ENCODE measurements at regions of chr2 and their contacts with region 1.

Region 1: GRCh38 chr2:152175458-152176325 is at the start of gene STAM2:
- DNase-seq: peak; percentile 95
- H3K4me3 ChIP-seq: peak within 1 kb of the TSS; percentile 83
- H3K27ac ChIP-seq: peak within 1 kb of the TSS; percentile 96
- H3K4me1 ChIP-seq: no peaks in the 10 kb centered on the region
- H3K27me3 ChIP-seq: no peaks in the 10 kb centered on the region
- CTCF ChIP-seq: peak; percentile 98
- total RNA-seq, gene STAM2: 21.3 and 28.1 TPM in 2 replicates

Region 2: GRCh38 chr2:152036611-152037469 is 138.9 kb before region 1 on chr2:
- CTCF ChIA-PET with region 1: no interaction called
- POLR2A ChIA-PET with region 1: no interaction called
- intact Hi-C with region 1: loop called (anchors 1 kb)
- DNase-seq: peak; percentile 80
- H3K4me3 ChIP-seq: no peak overlapping the region
- H3K27ac ChIP-seq: no peak overlapping the region
- H3K4me1 ChIP-seq: no peaks in the 10 kb centered on the region
- H3K27me3 ChIP-seq: no peaks in the 10 kb centered on the region
- CTCF ChIP-seq: peak; percentile 84

Region 3: DNA sequence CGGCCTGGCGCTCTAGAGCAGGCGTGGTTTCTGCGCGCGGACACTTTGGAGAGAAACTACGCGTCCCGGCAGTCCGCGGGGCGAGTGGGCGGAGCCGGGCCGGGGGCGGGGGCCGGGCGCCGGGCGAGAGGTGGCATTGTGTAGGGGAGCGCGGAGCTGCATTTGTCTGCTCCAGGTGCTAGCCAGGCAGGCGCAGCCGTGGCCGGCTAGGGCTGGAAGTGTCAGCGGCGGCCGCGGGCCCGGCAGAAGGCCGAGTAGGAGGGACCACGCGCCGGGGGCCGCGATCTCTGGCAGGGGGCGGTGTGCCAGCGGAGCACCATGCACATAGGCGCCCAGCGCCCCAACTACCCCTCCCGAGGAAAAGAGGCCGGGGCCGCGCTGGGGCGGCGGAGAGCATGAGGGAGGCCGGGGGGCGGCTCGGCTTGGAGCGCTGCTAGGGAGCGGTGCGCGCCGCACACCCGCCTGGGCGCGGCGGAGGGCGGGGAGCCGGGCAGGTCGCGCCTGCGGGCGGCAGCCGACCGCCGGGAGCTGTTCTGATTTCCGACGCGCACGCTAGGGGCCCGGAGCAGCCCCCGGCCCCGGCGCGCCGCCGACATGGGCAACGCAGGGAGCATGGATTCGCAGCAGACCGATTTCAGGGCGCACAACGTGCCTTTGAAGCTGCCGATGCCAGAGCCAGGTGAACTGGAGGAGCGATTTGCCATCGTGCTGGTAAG is 159.5 kb after region 1 on chr2 and contains the start of gene FMNL2:
- CTCF ChIA-PET with region 1: no interaction called
- POLR2A ChIA-PET with region 1: no interaction called
- intact Hi-C with region 1: loop called (anchors 1 kb)
- DNase-seq: peak; percentile 91
- H3K4me3 ChIP-seq: peak within 1 kb of the TSS; percentile 97
- H3K27ac ChIP-seq: peak within 1 kb of the TSS; percentile 82
- H3K4me1 ChIP-seq: peaks cover 14% of the 10 kb centered on the region
- H3K27me3 ChIP-seq: no peaks in the 10 kb centered on the region
- CTCF ChIP-seq: peak; percentile 29; the same call in 1 of the 2 replicates
- total RNA-seq, gene FMNL2: 42.2 and 43.1 TPM in 2 replicates

Region 4: DNA sequence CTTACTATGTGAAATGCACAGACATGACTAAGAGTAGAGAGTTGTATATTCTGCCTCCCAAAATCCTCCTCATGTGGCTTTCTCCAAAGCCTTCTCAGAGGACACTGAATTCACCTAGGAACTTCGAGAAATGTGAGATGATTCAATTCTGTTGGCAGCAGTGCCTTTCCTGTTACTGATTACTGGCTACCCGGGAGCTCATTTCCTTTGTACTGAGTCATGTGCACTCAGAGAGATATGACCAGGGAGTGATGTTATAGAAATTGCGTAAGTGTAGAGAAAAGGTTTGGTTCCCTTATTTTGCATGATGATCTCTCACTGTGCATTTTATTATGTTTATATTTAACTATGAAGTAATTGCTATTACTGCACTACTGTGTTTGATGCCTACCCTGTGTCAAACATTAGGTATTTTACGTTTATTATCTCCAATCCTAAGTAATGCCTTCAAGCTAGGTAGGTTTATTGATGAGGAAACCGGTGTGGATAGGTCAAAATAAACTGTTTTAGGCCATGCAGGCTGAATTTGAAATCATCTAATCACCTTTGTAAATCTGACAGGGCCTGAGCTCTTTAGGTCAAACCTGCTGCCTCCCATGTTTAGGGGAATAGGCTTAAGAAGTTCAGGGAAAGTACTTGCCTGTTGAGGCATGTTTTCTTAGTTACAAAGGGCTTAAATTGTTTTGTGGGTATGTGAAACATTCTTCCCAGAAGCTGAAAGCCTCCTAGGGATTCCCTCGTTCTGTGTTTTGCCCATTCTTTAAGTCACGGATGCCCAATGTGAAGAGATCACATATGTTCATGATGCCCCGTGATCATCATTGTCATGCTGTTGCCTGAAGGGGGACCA is 246.1 kb after region 1 on chr2:
- CTCF ChIA-PET with region 1: interaction called, 3 read pairs
- POLR2A ChIA-PET with region 1: no interaction called
- intact Hi-C with region 1: loop called (anchors 5 kb)
- DNase-seq: peak; percentile 98
- H3K4me3 ChIP-seq: peak overlapping the region; percentile 8
- H3K27ac ChIP-seq: peak overlapping the region; percentile 86
- H3K4me1 ChIP-seq: peaks cover 75% of the 10 kb centered on the region
- H3K27me3 ChIP-seq: no peaks in the 10 kb centered on the region
- CTCF ChIP-seq: no peak

Region 5: GRCh38 chr2:152635635-152636298 is 460.1 kb after region 1 on chr2:
- CTCF ChIA-PET with region 1: interaction called, 15 read pairs
- POLR2A ChIA-PET with region 1: no interaction called
- intact Hi-C with region 1: loop called (anchors 2 kb)
- DNase-seq: peak; percentile 68
- H3K4me3 ChIP-seq: no peak overlapping the region
- H3K27ac ChIP-seq: no peak overlapping the region
- H3K4me1 ChIP-seq: no peaks in the 10 kb centered on the region
- H3K27me3 ChIP-seq: no peaks in the 10 kb centered on the region
- CTCF ChIP-seq: peak; percentile 86

Region 6: DNA sequence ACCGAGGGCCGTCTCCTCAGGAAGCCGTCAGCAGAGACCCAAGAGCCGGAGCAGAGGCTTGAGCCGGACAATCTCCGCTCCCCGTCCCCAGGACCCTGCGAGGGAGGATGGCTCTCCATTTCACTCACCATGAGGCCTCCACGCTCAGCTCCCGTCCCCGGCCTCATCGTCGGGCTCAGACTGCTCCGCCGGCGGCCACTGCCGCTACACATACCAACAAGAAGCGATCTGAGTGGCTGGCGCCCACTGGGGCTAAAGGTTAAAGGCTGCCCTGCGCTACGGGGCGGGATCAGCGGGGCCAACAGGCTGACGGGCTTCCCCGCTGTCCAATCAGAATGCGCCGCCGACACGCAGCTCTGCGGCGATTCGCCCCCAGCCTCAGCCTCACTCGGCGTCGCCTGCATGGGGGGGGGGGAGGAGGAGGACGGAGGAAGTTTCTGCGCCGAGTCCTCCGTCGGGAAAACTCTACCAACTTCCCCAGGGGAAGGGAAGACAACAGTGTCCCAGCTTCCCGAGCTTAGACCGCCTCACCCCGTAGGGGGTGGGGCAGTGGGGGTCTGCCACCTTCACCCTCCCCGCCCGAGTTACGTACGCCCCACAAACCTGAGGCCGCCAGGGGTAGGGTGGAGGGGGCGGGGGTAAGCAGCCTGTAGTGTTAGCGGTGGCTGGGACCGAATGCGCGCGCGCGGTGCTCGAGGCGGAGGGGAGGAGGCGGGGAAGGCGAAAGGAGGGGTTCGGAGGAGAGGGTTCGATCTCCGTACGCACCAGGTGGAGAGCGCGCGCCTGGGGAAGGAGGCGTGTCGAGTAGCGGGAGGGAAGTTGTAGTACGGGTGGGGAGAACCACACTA is 541.8 kb after region 1 on chr2 and contains the start of gene PRPF40A:
- CTCF ChIA-PET with region 1: no interaction called
- POLR2A ChIA-PET with region 1: interaction called, 13 read pairs
- intact Hi-C with region 1: loop called (anchors 10 kb)
- DNase-seq: peak; percentile 98
- H3K4me3 ChIP-seq: peak within 1 kb of the TSS; percentile 76
- H3K27ac ChIP-seq: peak within 1 kb of the TSS; percentile 99
- H3K4me1 ChIP-seq: peaks cover 23% of the 10 kb centered on the region
- H3K27me3 ChIP-seq: no peaks in the 10 kb centered on the region
- CTCF ChIP-seq: no peak
- total RNA-seq, gene PRPF40A: 160 and 166 TPM in 2 replicates

Region 7: GRCh38 chr2:152740743-152741328 is 565.1 kb after region 1 on chr2:
- CTCF ChIA-PET with region 1: no interaction called
- POLR2A ChIA-PET with region 1: no interaction called
- intact Hi-C with region 1: loop called (anchors 5 kb)
- DNase-seq: peak; percentile 78
- H3K4me3 ChIP-seq: no peak overlapping the region
- H3K27ac ChIP-seq: no peak overlapping the region
- H3K4me1 ChIP-seq: no peaks in the 10 kb centered on the region
- H3K27me3 ChIP-seq: no peaks in the 10 kb centered on the region
- CTCF ChIP-seq: peak; percentile 84